GM23248 (cell line): ENCODE measurements at regions of chr22 and their contacts with region 1.

Region 1: DNA sequence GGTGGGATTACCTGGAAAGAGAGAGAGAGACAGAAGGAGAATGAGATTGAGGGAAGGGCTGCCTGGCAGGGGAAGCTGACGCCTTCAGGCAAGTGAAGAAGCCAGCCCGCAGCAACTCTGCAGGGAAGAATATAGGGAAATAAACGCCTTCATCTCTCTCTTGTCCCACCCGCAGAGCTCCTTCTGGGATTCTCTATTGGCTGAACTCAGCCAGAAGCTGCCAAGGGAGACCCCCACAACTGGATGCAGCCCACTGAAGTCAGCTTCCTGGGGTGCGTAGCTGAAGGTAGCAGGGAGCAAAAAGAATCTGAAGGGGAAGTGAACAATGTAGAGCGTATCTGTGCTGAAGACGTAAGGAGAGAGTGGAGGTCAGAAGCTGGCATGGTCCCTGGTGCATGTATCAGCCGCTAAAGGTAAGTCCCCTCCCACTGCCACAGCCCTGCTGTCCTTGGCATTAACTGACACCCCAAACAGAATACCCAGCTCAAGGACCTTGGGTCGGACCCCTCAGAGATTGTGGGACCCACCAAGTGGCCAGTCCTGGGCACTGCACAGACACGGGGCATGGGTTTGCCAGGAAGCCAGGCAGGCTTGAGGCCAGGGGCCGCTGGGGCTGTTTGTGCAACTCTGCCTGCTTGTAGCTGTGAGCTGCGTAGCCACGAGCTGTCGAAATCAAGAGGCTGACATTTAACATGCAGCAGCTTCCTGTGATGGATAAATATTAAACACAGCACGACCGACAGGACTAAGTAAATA is 469.9 kb downstream of the MN1 start:
- DNase-seq: peak; percentile 82
- H3K4me3 ChIP-seq: no peak overlapping the region
- H3K27ac ChIP-seq: no peak overlapping the region
- H3K4me1 ChIP-seq: 0 out of 2 replicates have a peak, but pooled peaks cover 8% of the 10 kb centered on the region
- H3K27me3 ChIP-seq: 0 out of 2 replicates have a peak, but pooled peaks cover 2% of the 10 kb centered on the region

Region 2: GRCh38 chr22:26763633-26764361 is 567.9 kb before region 1 on chr22:
- in situ Hi-C with region 1: loop called (anchors 10 kb)
- DNase-seq: peak; percentile 76
- H3K4me3 ChIP-seq: no peak overlapping the region
- H3K27ac ChIP-seq: peak overlapping the region; percentile 44
- H3K4me1 ChIP-seq: peaks cover 28% of the 10 kb centered on the region
- H3K27me3 ChIP-seq: no peaks in the 10 kb centered on the region